CD4-positive, alpha-beta T cell (primary cell): ENCODE measurements at regions of chr15 and their contacts with region 1.

Region 1: GRCh38 chr15:64651573-64652260 is 123.7 kb downstream of the RBPMS2 start:
- DNase-seq: peak in 13 of 14 experiments; percentile 9 to 78 (median 29)
- ATAC-seq: peak; percentile 92
- H3K4me3 ChIP-seq: no peak overlapping the region
- H3K4me3 Mint-ChIP-seq: peak overlapping the region; percentile 73
- H3K27ac ChIP-seq: peak overlapping the region; percentile 2 to 54
- H3K27ac Mint-ChIP-seq: peak overlapping the region; percentile 82
- H3K4me1 ChIP-seq: peaks cover 36% of the 10 kb centered on the region
- H3K4me1 Mint-ChIP-seq: peaks cover 64% of the 10 kb centered on the region
- H3K27me3 ChIP-seq: no peaks in the 10 kb centered on the region
- H3K27me3 Mint-ChIP-seq: no peaks in the 10 kb centered on the region
- CTCF ChIP-seq: no peak

Region 2: DNA sequence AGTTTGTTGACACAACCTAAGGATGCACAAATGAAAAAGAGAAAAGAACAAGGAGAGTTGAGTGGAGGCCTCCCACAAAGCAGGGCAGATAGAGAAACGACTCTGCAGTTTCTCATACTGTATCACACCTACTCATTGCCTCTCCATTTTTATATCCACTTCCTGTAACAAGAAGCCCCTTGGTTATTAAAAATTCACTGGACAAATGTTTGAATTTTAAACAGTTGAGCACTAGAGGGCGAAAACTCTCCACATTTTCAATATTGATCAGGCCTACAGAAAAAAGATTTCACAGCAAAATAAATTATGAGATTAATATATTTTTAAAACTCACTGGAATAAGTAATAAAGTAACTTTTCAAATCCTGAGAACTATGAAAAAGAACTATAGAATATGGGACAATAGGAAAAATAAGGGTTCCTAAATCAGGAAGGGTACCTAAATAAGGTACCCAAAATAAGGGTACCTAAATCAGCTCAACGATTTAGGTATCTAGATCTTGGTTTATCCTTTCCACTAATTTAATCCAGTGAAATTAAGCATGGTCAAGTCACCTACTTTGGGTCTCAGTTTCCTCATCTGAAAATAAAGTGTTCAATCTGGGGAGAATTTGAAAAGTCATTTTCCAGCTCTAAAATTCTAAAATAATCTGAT is 441.9 kb before region 1 on chr15:
- CTCF ChIA-PET with region 1: no interaction called
- POLR2A ChIA-PET with region 1: no interaction called
- intact Hi-C with region 1: loop called in 1 of 2 experiments (anchors 5 kb)
- DNase-seq: peak in 3 of 14 experiments; percentile 19 to 27 (median 27)
- ATAC-seq: no peak
- H3K4me3 ChIP-seq: no peak overlapping the region
- H3K4me3 Mint-ChIP-seq: no peak overlapping the region
- H3K27ac ChIP-seq: no peak overlapping the region
- H3K27ac Mint-ChIP-seq: peak overlapping the region; percentile 7
- H3K4me1 ChIP-seq: no peaks in the 10 kb centered on the region
- H3K4me1 Mint-ChIP-seq: no peaks in the 10 kb centered on the region
- H3K27me3 ChIP-seq: no peaks in the 10 kb centered on the region
- H3K27me3 Mint-ChIP-seq: no peaks in the 10 kb centered on the region
- CTCF ChIP-seq: peak; percentile 43

Region 3: GRCh38 chr15:64430000-64430735 is 221.5 kb before region 1 on chr15:
- CTCF ChIA-PET with region 1: interaction called, 19 read pairs
- POLR2A ChIA-PET with region 1: interaction called, 13 read pairs
- intact Hi-C with region 1: loop called (anchors 1 to 2 kb)
- DNase-seq: peak in 13 of 14 experiments; percentile 17 to 85 (median 37)
- ATAC-seq: peak; percentile 91
- H3K4me3 ChIP-seq: peak overlapping the region; percentile 12
- H3K4me3 Mint-ChIP-seq: peak overlapping the region; percentile 79
- H3K27ac ChIP-seq: peak overlapping the region; percentile 31 to 52
- H3K27ac Mint-ChIP-seq: peak overlapping the region; percentile 97
- H3K4me1 ChIP-seq: peaks cover 36% of the 10 kb centered on the region
- H3K4me1 Mint-ChIP-seq: peaks cover 52% of the 10 kb centered on the region
- H3K27me3 ChIP-seq: no peaks in the 10 kb centered on the region
- H3K27me3 Mint-ChIP-seq: no peaks in the 10 kb centered on the region
- CTCF ChIP-seq: no peak

Region 4: GRCh38 chr15:64507293-64507802 is 144.4 kb before region 1 on chr15:
- CTCF ChIA-PET with region 1: interaction called, 4 read pairs
- POLR2A ChIA-PET with region 1: interaction called, 12 read pairs
- intact Hi-C with region 1: loop called in 1 of 2 experiments (anchors 5 kb)
- DNase-seq: peak in 11 of 14 experiments; percentile 5 to 60 (median 22)
- ATAC-seq: peak; percentile 67
- H3K4me3 ChIP-seq: no peak overlapping the region
- H3K4me3 Mint-ChIP-seq: peak overlapping the region; percentile 34
- H3K27ac ChIP-seq: peak overlapping the region; percentile 18 to 34
- H3K27ac Mint-ChIP-seq: peak overlapping the region; percentile 89
- H3K4me1 ChIP-seq: peaks cover 41% of the 10 kb centered on the region
- H3K4me1 Mint-ChIP-seq: peaks cover 87% of the 10 kb centered on the region
- H3K27me3 ChIP-seq: no peaks in the 10 kb centered on the region
- H3K27me3 Mint-ChIP-seq: no peaks in the 10 kb centered on the region
- CTCF ChIP-seq: no peak

Region 5: GRCh38 chr15:64622410-64623260 is 29.1 kb before region 1 on chr15:
- CTCF ChIA-PET with region 1: interaction called, 3 read pairs
- POLR2A ChIA-PET with region 1: interaction called, 9 read pairs
- intact Hi-C with region 1: loop called in 1 of 2 experiments (anchors 1 kb)
- DNase-seq: peak; percentile 12 to 83 (median 42)
- ATAC-seq: peak; percentile 80
- H3K4me3 ChIP-seq: peak overlapping the region; percentile 35
- H3K4me3 Mint-ChIP-seq: peak overlapping the region; percentile 81
- H3K27ac ChIP-seq: peak overlapping the region; percentile 13 to 59
- H3K27ac Mint-ChIP-seq: peak overlapping the region; percentile 86
- H3K4me1 ChIP-seq: peaks cover 86% of the 10 kb centered on the region
- H3K4me1 Mint-ChIP-seq: peaks cover 93% of the 10 kb centered on the region
- H3K27me3 ChIP-seq: no peaks in the 10 kb centered on the region
- H3K27me3 Mint-ChIP-seq: no peaks in the 10 kb centered on the region
- CTCF ChIP-seq: no peak

Region 6: DNA sequence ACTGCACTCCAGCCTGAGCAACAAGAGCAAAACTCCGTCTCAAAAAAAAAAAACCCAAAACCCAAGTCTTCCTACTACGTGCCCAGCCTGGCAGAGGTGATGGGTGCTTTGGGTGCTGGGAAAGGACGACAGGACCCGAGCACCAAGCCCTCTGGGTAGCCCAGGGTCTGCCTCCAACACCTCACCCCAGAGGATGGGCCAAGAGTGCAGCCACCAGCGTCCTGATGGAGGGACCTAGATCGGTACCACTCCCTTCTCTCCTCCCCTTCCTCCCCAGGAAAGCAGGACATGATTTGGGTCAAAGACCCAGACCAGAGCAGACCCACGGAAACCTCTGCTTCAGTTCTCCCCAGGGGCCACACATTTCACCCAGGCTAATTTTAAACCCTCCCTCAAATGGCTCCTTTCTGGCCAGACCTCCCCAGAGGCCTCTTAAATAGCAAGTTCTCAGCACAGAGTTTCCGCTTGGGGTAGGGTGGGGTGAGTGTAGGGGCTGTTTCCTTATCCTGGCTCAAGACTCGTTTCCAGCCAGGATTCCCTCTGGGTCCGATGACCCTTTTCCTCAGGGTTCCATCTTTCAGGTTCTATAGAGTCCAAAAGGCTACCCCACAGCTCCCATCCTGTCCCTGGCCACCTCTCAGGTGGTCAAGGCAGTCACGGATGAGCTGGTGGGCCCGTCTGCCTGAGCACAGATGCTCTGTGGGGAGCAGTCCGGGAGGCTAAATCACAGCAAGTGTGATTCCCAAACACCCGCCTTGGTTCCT is 103.1 kb after region 1 on chr15:
- CTCF ChIA-PET with region 1: no interaction called
- POLR2A ChIA-PET with region 1: no interaction called
- intact Hi-C with region 1: no loop called
- DNase-seq: no peak
- ATAC-seq: no peak
- H3K4me3 ChIP-seq: no peak overlapping the region
- H3K4me3 Mint-ChIP-seq: no peak overlapping the region
- H3K27ac ChIP-seq: no peak overlapping the region
- H3K27ac Mint-ChIP-seq: no peak overlapping the region
- H3K4me1 ChIP-seq: no peaks in the 10 kb centered on the region
- H3K4me1 Mint-ChIP-seq: no peaks in the 10 kb centered on the region
- H3K27me3 ChIP-seq: no peaks in the 10 kb centered on the region
- H3K27me3 Mint-ChIP-seq: no peaks in the 10 kb centered on the region
- CTCF ChIP-seq: no peak